AG04450 (cell line): ENCODE measurements at regions of chr10 and their contacts with region 1.

Region 1: GRCh38 chr10:17257466-17258321 is 29.7 kb downstream of the VIM start:
- DNase-seq: no peak
- H3K4me3 ChIP-seq: peak overlapping the region; percentile 35
- H3K27ac ChIP-seq: no peak overlapping the region
- H3K27me3 ChIP-seq: no peaks in the 10 kb centered on the region
- CTCF ChIP-seq: peak; percentile 88

Region 2: GRCh38 chr10:16828114-16828568 is 429.6 kb before region 1 on chr10:
- CTCF ChIA-PET with region 1: interaction called, 15 read pairs
- POLR2A ChIA-PET with region 1: no interaction called
- DNase-seq: peak; percentile 57
- H3K4me3 ChIP-seq: no peak overlapping the region
- H3K27ac ChIP-seq: no peak overlapping the region
- H3K27me3 ChIP-seq: no peaks in the 10 kb centered on the region
- CTCF ChIP-seq: peak; percentile 60

Region 3: GRCh38 chr10:16843252-16843870 is 414.3 kb before region 1 on chr10:
- CTCF ChIA-PET with region 1: interaction called, 32 read pairs
- POLR2A ChIA-PET with region 1: no interaction called
- DNase-seq: peak; percentile 52
- H3K4me3 ChIP-seq: no peak overlapping the region
- H3K27ac ChIP-seq: no peak overlapping the region
- H3K27me3 ChIP-seq: no peaks in the 10 kb centered on the region
- CTCF ChIP-seq: peak; percentile 53

Region 4: GRCh38 chr10:16853201-16853600 is 404.5 kb before region 1 on chr10:
- CTCF ChIA-PET with region 1: interaction called, 10 read pairs
- POLR2A ChIA-PET with region 1: no interaction called
- DNase-seq: no peak
- H3K4me3 ChIP-seq: no peak overlapping the region
- H3K27ac ChIP-seq: no peak overlapping the region
- H3K27me3 ChIP-seq: no peaks in the 10 kb centered on the region
- CTCF ChIP-seq: peak; percentile 68